ENCODE measurements at regions of chr1 and their contacts with region 1.

Region 1: DNA sequence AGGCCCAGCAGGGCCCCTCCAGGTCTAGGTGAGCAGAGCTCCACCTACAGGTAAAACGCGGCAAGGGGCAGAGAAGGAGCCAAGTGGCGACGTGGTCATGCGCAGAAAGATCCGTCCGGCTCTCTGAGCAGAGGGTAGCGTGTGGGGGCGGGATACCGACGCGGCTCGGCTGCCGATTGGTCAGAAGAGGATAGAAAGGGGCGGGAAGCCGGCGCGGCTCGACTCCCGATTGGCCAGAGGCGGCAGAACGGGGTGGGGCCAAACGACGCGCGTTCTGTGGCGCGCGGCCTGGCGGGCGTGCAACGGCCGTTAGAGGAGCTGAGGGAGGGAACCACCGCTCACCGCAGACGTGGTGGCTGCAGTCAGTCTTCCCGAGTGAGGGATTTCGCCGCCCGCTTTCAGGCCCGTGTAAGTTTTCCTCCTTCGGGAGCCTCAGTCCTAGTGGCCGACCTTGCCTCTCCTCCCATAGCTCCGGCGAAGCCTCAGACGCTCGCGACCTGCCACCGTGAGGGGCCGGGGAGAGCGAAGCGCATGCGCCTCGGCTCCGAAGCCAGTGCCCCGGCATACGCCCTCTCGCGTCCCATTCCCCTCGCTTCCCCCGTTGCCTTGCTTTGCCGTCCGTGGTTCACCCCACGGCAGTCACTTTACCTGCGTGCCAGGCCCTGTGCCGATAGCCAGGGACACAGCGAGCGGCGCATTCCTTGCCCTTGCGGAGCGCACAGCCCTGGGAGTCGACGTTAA is at the start of gene CEP85:
- DNase-seq: peak; percentile 99
- ATAC-seq: peak; percentile 95
- H3K4me3 Mint-ChIP-seq: peak within 1 kb of the TSS; percentile 99
- H3K27ac Mint-ChIP-seq: peak within 1 kb of the TSS; percentile 96
- H3K4me1 Mint-ChIP-seq: peaks cover 32% of the 10 kb centered on the region
- H3K27me3 Mint-ChIP-seq: no peaks in the 10 kb centered on the region
- total RNA-seq, gene CEP85: 31.1 to 31.9 TPM

Region 2: GRCh38 chr1:25858906-25859789 is 374.9 kb before region 1 on chr1 and contains the start of gene AUNIP:
- CTCF ChIA-PET with region 1: no interaction called
- POLR2A ChIA-PET with region 1: no interaction called
- intact Hi-C with region 1: loop called in 1 of 2 experiments (anchors 1 kb)
- DNase-seq: peak; percentile 97
- ATAC-seq: peak; percentile 95
- H3K4me3 Mint-ChIP-seq: peak within 1 kb of the TSS; percentile 94
- H3K27ac Mint-ChIP-seq: peak within 1 kb of the TSS; percentile 93
- H3K4me1 Mint-ChIP-seq: peaks cover 13% of the 10 kb centered on the region
- H3K27me3 Mint-ChIP-seq: no peaks in the 10 kb centered on the region
- total RNA-seq, gene AUNIP: 9.6 to 12.9 TPM

Region 3: GRCh38 chr1:26035959-26036755 is 197.9 kb before region 1 on chr1:
- CTCF ChIA-PET with region 1: interaction called, 5 read pairs
- POLR2A ChIA-PET with region 1: no interaction called
- intact Hi-C with region 1: loop called in 1 of 2 experiments (anchors 1 kb)
- DNase-seq: peak; percentile 86
- ATAC-seq: peak; percentile 76
- H3K4me3 Mint-ChIP-seq: peak overlapping the region; percentile 80
- H3K27ac Mint-ChIP-seq: peak overlapping the region; percentile 78
- H3K4me1 Mint-ChIP-seq: peaks cover 13% of the 10 kb centered on the region
- H3K27me3 Mint-ChIP-seq: peaks cover 6% of the 10 kb centered on the region

Region 4: DNA sequence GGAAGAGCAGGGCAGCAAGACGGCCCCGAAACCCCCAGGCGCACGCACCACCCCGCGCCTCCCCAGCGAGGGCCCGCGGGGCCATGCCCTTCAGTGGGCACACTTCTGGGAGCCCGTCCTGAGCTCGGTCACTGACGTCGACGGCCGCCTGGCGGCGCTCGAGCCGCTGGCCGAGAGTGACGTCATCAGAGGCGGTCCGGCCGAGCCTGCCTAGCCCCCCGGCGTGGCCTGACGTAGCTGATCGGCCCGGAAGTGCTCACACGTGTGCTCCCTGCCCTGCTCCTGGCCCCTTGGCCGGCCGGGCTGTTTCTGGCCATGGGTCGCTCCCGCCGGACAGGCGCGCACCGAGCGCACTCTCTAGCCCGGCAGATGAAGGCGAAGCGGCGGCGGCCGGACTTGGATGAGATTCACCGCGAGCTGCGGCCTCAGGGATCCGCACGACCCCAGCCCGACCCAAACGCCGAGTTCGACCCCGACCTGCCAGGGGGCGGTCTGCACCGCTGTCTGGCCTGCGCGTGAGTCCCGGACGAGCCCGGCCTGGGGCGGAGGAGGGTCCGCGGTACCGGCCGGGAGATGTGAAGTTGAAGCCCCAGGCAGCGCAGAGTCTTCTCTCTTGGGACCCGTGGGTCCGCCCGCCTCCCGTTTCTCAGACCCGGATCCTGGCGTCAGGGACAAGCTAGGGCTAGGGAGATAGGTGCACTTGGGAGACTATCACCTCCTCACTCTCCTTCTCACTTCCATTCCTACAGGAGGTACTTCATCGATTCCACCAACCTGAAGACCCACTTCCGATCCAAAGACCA is 64.2 kb before region 1 on chr1 and contains the start of gene ZNF593:
- CTCF ChIA-PET with region 1: interaction called, 35 read pairs
- POLR2A ChIA-PET with region 1: interaction called, 13 read pairs
- intact Hi-C with region 1: loop called (anchors 1 to 2 kb)
- DNase-seq: peak; percentile 94
- ATAC-seq: peak; percentile 96
- H3K4me3 Mint-ChIP-seq: peak within 1 kb of the TSS; percentile 95
- H3K27ac Mint-ChIP-seq: peak within 1 kb of the TSS; percentile 88
- H3K4me1 Mint-ChIP-seq: peaks cover 10% of the 10 kb centered on the region
- H3K27me3 Mint-ChIP-seq: no peaks in the 10 kb centered on the region
- total RNA-seq, gene ZNF593: 44.6 to 56.3 TPM

Region 5: GRCh38 chr1:26263212-26263611 is 29.1 kb after region 1 on chr1:
- CTCF ChIA-PET with region 1: interaction called, 11 read pairs
- POLR2A ChIA-PET with region 1: no interaction called
- intact Hi-C with region 1: no loop called
- DNase-seq: no peak
- ATAC-seq: no peak
- H3K4me3 Mint-ChIP-seq: no peak overlapping the region
- H3K27ac Mint-ChIP-seq: peak overlapping the region; percentile 53
- H3K4me1 Mint-ChIP-seq: peaks cover 7% of the 10 kb centered on the region
- H3K27me3 Mint-ChIP-seq: no peaks in the 10 kb centered on the region

Region 6: DNA sequence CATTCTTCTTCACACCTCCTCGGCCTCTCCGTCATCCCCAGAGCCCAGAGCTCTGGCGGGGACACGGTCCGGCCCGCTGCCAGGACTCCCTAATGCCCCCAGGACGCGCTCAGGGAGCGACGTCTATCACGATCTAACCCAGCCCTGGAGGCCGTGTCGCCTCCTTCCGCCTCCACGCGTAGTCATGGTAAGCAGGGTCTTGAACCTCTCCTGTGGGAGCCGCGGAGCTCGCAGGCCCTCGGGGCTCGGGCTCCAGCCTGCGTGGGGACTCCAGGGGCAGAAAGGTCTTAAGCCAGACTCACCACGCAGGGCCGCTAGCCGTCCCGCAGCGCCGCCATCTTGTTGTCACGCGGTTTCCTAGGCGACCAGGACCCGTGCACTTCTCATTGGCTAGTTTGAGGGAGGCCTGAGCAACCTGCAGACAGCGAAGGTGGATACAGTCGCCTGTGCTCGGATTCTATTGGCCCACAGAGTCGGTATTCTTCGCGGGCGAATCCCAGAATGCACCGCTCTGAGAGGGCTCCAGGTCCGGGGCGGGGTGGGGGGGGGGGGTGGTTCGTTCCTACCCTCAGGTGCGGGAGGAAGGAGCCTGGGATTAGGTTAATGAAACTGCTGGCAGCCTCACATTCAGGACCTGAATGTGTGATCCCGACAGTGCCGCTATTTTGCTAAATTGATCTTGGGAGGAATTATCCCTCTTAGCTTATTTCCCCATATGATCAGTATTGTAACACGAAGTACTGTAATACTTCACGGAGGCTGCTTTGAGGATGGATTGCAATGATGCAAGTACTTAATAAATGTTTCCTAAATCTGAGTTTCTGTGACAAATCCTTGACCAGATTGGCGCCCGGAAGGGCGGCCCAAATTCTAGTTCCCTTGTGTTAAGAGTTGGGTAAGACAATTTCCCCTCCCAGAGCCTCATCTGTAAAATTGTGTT is 72.5 kb after region 1 on chr1 and contains the start of gene UBXN11:
- CTCF ChIA-PET with region 1: interaction called, 7 read pairs
- POLR2A ChIA-PET with region 1: no interaction called
- intact Hi-C with region 1: loop called in 1 of 2 experiments (anchors 1 kb)
- DNase-seq: peak; percentile 96
- ATAC-seq: peak; percentile 94
- H3K4me3 Mint-ChIP-seq: peak within 1 kb of the TSS; percentile 90
- H3K27ac Mint-ChIP-seq: peak within 1 kb of the TSS; percentile 95
- H3K4me1 Mint-ChIP-seq: peaks cover 32% of the 10 kb centered on the region
- H3K27me3 Mint-ChIP-seq: no peaks in the 10 kb centered on the region
- total RNA-seq, gene UBXN11: 19.4 to 22.2 TPM

Region 7: GRCh38 chr1:26431979-26432695 is 198.1 kb after region 1 on chr1 and contains the start of gene DHDDS:
- CTCF ChIA-PET with region 1: interaction called, 7 read pairs
- POLR2A ChIA-PET with region 1: interaction called, 3 read pairs
- intact Hi-C with region 1: loop called in 1 of 2 experiments (anchors 1 kb)
- DNase-seq: peak; percentile 99
- ATAC-seq: peak; percentile 98
- H3K4me3 Mint-ChIP-seq: peak within 1 kb of the TSS; percentile 92
- H3K27ac Mint-ChIP-seq: peak within 1 kb of the TSS; percentile 92
- H3K4me1 Mint-ChIP-seq: peaks cover 17% of the 10 kb centered on the region
- H3K27me3 Mint-ChIP-seq: no peaks in the 10 kb centered on the region
- total RNA-seq, gene DHDDS: 34.1 to 40.7 TPM

Region 8: DNA sequence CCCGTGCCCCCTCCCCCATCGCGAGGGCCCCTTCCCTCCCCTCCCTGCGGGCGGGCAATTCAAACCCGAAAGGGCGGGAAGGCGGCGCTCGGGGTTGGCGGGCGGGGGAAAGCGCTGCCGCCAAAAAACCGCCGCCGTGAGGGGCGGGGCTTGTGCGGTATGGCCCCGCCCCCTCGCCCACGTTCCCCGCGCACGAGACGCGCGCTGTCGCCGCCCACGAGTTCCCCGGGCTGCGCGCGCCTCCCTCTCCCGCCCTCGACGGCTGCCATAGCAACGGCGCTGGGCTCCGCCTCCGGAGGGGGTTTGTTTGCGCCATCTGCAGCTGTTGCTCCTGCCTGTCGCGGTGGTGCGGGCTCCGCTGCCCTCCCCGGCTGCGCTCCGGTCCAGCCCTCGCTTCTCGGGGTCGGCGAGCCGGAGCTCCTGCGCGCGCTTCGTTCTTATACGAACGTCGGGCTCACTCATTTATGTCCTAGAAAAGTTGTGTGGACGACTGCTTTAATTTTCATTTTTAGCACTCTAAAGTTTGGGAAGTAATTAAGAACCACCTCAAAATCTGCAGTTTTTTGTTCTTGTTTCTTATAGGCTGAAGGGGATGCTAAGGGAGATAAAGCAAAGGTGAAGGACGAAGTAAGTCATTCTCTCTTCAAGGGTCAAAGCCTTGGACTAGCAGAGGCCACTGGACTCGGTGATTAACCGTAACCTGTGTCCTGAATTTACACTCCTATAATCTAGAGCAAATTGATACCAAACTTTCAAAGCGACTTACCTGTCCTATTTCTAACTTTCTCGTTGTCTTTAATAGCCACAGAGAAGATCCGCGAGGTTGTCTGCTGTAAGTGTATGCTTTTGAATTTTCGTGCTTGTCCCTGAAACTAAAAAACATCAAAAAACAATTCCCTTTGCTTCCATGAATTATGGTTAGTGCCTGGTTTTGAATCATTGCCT is 239.1 kb after region 1 on chr1:
- CTCF ChIA-PET with region 1: no interaction called
- POLR2A ChIA-PET with region 1: no interaction called
- intact Hi-C with region 1: no loop called
- DNase-seq: peak; percentile 97
- ATAC-seq: peak; percentile 62
- H3K4me3 Mint-ChIP-seq: peak overlapping the region; percentile 91
- H3K27ac Mint-ChIP-seq: peak overlapping the region; percentile 43
- H3K4me1 Mint-ChIP-seq: peaks cover 50% of the 10 kb centered on the region
- H3K27me3 Mint-ChIP-seq: no peaks in the 10 kb centered on the region

Region 9: GRCh38 chr1:26853156-26853555 is 619.1 kb after region 1 on chr1:
- CTCF ChIA-PET with region 1: no interaction called
- POLR2A ChIA-PET with region 1: no interaction called
- intact Hi-C with region 1: no loop called
- DNase-seq: peak; percentile 87
- ATAC-seq: peak; percentile 84
- H3K4me3 Mint-ChIP-seq: no peak overlapping the region
- H3K27ac Mint-ChIP-seq: no peak overlapping the region
- H3K4me1 Mint-ChIP-seq: no peaks in the 10 kb centered on the region
- H3K27me3 Mint-ChIP-seq: no peaks in the 10 kb centered on the region